ENCODE measurements at regions of chr17 and their contacts with region 1.

Region 1: GRCh38 chr17:47850692-47851573 is at the start of gene SP6:
- DNase-seq: peak in 1 of 2 donors; percentile 34
- H3K4me3 ChIP-seq: peak within 1 kb of the TSS; percentile 21
- CTCF ChIP-seq: no peak
- POLR2A ChIP-seq: no peak
- total RNA-seq, gene SP6: 21.9 to 29.9 (median 24.7) TPM

Region 2: DNA sequence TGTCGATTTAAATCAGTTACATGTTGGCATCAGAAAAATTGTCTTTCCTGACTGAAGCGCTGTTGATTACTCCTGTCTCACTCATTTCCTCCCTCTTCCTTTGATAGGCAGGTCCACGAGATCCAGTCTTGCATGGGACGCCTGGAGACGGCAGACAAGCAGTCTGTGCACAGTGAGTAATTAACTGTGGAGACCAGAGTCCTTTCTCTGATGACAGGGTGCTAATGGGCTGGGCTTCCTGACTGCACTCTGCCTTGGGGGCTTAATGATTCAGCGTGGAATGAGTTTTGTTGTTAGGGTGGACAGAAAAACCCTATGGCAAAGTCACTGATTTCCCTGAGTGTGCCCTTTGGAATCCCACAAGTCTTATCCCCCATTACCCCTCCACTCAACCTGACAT is 921.5 kb before region 1 on chr17:
- intact Hi-C with region 1: no loop called
- DNase-seq: no peak
- H3K4me3 ChIP-seq: no peak overlapping the region
- CTCF ChIP-seq: no peak
- POLR2A ChIP-seq: no peak

Region 3: GRCh38 chr17:47945529-47946508 is 94.9 kb after region 1 on chr17:
- intact Hi-C with region 1: loop called (anchors 2 kb)
- DNase-seq: no peak
- H3K4me3 ChIP-seq: no peak overlapping the region
- CTCF ChIP-seq: no peak
- POLR2A ChIP-seq: no peak

Region 4: DNA sequence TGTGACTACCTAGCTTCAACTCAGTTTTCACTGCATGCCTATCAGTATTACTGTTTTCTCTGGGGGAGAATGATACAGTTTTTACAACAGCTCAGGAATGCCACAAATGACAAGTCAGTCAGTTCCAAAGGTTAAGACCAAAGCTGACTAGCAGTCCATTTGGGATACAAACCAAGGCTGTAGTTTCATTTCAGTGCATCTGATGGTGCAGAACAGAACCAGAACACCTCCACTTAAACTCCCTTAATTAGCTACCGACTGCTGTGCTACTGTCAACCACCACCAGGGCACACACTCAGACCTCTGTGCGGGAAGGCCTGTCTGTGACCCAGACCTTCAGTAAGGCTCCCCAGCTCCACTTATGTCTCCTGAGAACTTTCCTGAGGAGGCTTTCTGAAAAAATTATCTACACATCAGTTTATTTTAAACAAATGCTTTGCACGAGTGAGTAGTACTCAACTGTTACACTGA is 217.6 kb after region 1 on chr17:
- intact Hi-C with region 1: loop called (anchors 2 kb)
- DNase-seq: no peak
- H3K4me3 ChIP-seq: no peak overlapping the region
- CTCF ChIP-seq: no peak
- POLR2A ChIP-seq: no peak